K562 (cell line): ENCODE measurements at regions of chrX and their contacts with region 1.

Region 1: GRCh38 chrX:57453901-57454300 is 137.9 kb upstream of the ZXDB start:
- DNase-seq: peak; percentile 7 to 32 (median 10)
- ATAC-seq: peak; percentile 58; the same call in 2 of the 3 replicates
- H3K4me3 ChIP-seq: no peak overlapping the region
- H3K27ac ChIP-seq: no peak overlapping the region
- H3K4me1 ChIP-seq: no peaks in the 10 kb centered on the region
- H3K27me3 ChIP-seq: no peaks in the 10 kb centered on the region
- CTCF ChIP-seq: peak; percentile 38 to 59 (median 52); a peak in 4 of 6 replicates
- EP300 ChIP-seq: no peak
- POLR2A ChIP-seq: no peak
- RAD21 ChIP-seq: peak in 1 of 2 experiments; percentile 48; a peak in 2 of 4 replicates

Region 2: GRCh38 chrX:56729152-56729850 is 724.6 kb before region 1 on chrX and contains the start of gene NBDY:
- CTCF ChIA-PET with region 1: no interaction called
- POLR2A ChIA-PET with region 1: no interaction called
- in situ Hi-C with region 1: no loop called
- intact Hi-C with region 1: no loop called
- DNase-seq: peak; percentile 4 to 32 (median 10)
- ATAC-seq: peak; percentile 93
- H3K4me3 ChIP-seq: peak within 1 kb of the TSS; percentile 45
- H3K27ac ChIP-seq: peak within 1 kb of the TSS; percentile 24; the same call in 1 of the 3 replicates
- H3K4me1 ChIP-seq: no peaks in the 10 kb centered on the region
- H3K27me3 ChIP-seq: no peaks in the 10 kb centered on the region
- CTCF ChIP-seq: no peak
- EP300 ChIP-seq: no peak
- POLR2A ChIP-seq: no peak
- RAD21 ChIP-seq: no peak
- polyA plus RNA-seq, gene NBDY: 24.2 to 24.7 TPM

Region 3: DNA sequence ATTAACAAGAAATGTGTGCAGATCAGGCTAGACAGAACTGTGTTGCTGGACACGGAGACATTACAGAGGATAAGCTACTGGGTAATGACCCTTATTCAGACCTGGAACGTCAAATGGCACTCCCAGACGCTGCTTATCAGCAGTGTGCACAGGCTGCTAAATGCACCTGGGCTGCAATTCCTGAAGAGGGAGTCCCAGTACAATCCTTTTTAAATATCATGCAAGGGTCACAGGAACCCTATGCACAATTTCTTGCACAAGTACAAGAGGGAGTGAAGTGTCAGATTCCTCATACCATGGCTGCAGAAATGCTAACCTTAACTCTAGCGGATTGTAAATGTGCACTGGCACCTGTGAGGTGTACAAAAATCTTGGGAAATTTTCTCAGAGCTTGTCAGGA is 349.5 kb before region 1 on chrX:
- CTCF ChIA-PET with region 1: no interaction called
- POLR2A ChIA-PET with region 1: no interaction called
- in situ Hi-C with region 1: no loop called
- intact Hi-C with region 1: loop called (anchors 5 kb)
- DNase-seq: peak in 1 of 4 experiments; percentile 25
- ATAC-seq: no peak
- H3K4me3 ChIP-seq: no peak overlapping the region
- H3K27ac ChIP-seq: no peak overlapping the region
- H3K4me1 ChIP-seq: no peaks in the 10 kb centered on the region
- H3K27me3 ChIP-seq: no peaks in the 10 kb centered on the region
- CTCF ChIP-seq: peak in 1 of 3 experiments; percentile 25; a peak in 1 of 6 replicates
- EP300 ChIP-seq: no peak
- POLR2A ChIP-seq: no peak
- RAD21 ChIP-seq: peak in 1 of 2 experiments; percentile 24; a peak in 1 of 4 replicates

Region 4: GRCh38 chrX:57156397-57157049 is 297.4 kb before region 1 on chrX:
- CTCF ChIA-PET with region 1: no interaction called
- POLR2A ChIA-PET with region 1: no interaction called
- in situ Hi-C with region 1: no loop called
- intact Hi-C with region 1: loop called (anchors 5 kb)
- DNase-seq: peak in 3 of 4 experiments; percentile 8 to 49 (median 23)
- ATAC-seq: peak; percentile 94
- H3K4me3 ChIP-seq: no peak overlapping the region
- H3K27ac ChIP-seq: no peak overlapping the region
- H3K4me1 ChIP-seq: peaks cover 0 to 12% of the 10 kb centered on the region in 2 experiments; a peak in 3 of 5 replicates
- H3K27me3 ChIP-seq: no peaks in the 10 kb centered on the region
- CTCF ChIP-seq: peak; percentile 40 to 56 (median 46); a peak in 5 of 6 replicates
- EP300 ChIP-seq: no peak
- POLR2A ChIP-seq: no peak
- RAD21 ChIP-seq: peak; percentile 12 to 61; a peak in 2 of 4 replicates

Region 5: DNA sequence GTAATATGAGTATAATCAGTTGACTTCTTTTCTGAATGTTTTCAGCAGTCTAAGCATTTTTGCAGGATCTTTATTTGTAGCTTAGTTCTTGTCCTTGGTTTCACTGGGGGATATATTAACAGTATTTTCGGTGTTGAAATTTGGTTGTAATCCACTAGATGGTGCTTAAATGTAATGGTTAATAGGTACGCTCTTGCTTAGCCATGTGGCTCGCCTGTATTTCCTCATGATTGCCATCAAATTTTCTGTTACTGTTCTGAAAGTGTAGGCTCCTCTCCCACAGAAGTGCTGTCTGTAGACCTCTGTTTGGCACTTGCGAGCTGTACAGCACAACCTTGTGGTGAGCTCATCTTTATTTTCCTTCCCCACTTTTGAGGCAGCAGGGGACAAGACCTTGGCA is 171.3 kb before region 1 on chrX:
- CTCF ChIA-PET with region 1: no interaction called
- POLR2A ChIA-PET with region 1: no interaction called
- in situ Hi-C with region 1: no loop called
- intact Hi-C with region 1: loop called (anchors 5 kb)
- DNase-seq: peak in 1 of 4 experiments; percentile 1
- ATAC-seq: no peak; the same call in 1 of the 3 replicates
- H3K4me3 ChIP-seq: no peak overlapping the region
- H3K27ac ChIP-seq: no peak overlapping the region
- H3K4me1 ChIP-seq: no peaks in the 10 kb centered on the region
- H3K27me3 ChIP-seq: no peaks in the 10 kb centered on the region
- CTCF ChIP-seq: 0 out of 6 replicates have a peak, but pooled peaks of 1 of the 3 experiments have one; percentile 10
- EP300 ChIP-seq: no peak
- POLR2A ChIP-seq: no peak
- RAD21 ChIP-seq: no peak

Region 6: DNA sequence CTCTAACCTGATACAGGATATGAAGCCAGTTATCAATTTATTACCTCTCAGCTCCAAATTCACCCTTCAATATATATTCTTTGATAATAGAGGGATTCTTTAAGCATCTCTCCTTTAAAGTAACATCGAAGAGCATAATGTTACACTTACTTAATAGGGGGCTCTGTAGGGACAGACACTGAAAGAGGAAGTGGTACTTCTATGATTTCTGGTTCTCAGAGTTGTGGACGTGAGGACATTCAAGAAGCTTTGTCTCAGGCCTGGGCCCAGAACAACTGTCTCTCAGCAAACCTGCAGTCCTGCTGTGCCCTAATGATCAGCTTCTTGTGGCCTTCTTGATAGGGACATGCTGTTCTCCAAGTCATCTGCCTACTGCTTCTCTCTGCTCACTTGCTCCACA is 133.7 kb after region 1 on chrX:
- CTCF ChIA-PET with region 1: no interaction called
- POLR2A ChIA-PET with region 1: no interaction called
- in situ Hi-C with region 1: no loop called
- intact Hi-C with region 1: no loop called
- DNase-seq: no peak
- ATAC-seq: no peak
- H3K4me3 ChIP-seq: no peak overlapping the region
- H3K27ac ChIP-seq: no peak overlapping the region
- H3K4me1 ChIP-seq: peaks cover 2 to 4% of the 10 kb centered on the region in 2 experiments; a peak in 2 of 5 replicates
- H3K27me3 ChIP-seq: no peaks in the 10 kb centered on the region
- CTCF ChIP-seq: no peak
- EP300 ChIP-seq: no peak
- POLR2A ChIP-seq: no peak
- RAD21 ChIP-seq: no peak